ENCODE measurements at regions of chr11 and their contacts with region 1.

Region 1: GRCh38 chr11:78416305-78417178 is 1.1 kb downstream of the GAB2 start:
- DNase-seq: no peak
- ATAC-seq: peak; percentile 63
- H3K4me3 ChIP-seq: peak overlapping the region; percentile 74
- H3K27ac ChIP-seq: peak overlapping the region; percentile 56
- H3K4me1 ChIP-seq: peaks cover 22% of the 10 kb centered on the region
- H3K27me3 ChIP-seq: no peaks in the 10 kb centered on the region
- CTCF ChIP-seq: peak; percentile 72 to 75 (median 72)
- EP300 ChIP-seq: no peak
- POLR2A ChIP-seq: peak; percentile 62; the same call in 1 of the 2 replicates
- RAD21 ChIP-seq: peak; percentile 72

Region 2: DNA sequence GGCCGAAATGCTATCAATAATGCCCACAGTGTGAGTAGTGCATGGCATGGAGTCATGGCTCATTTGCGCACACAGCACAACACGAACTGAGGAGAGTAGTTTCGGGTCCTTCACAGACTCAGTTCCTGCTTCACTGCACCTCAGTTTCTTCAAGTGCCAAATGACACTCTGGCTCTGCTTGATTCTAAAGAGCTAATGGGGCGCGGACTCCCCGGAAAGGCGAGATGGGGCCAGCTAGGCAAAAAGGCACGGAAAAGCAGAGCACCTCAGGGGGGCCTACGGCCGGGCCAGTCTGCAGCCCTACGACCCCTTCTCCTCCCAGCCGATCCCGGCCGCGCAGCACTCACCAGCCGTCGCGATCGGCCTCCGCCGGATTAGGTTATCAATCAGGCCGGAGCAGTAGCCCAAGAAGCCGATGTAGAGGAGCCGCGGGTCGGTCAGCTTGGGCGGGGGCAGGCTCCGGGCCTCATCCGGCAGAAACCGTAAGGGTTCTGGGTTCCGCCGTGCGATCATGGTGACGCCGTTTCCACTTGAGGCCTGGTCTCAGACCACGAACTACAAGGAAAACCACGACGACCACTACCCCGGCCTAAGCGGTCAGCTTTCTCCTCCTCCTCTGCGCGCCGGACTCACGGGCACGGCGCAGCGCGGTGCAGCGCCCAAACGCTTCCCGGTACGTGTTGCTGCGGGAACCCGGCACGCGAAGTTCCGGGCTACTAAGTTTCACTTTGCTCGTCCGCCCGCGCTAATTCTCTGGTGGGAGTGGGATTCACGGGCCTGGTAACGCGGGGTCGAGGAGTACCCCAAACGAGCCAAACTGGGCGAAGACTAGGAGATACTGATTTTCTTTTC is 337.1 kb before region 1 on chr11 and contains the start of gene NDUFC2:
- CTCF ChIA-PET with region 1: no interaction called
- POLR2A ChIA-PET with region 1: interaction called, 3 read pairs
- RAD21 ChIA-PET with region 1: no interaction called
- SMC1A ChIA-PET with region 1: no interaction called
- in situ Hi-C with region 1: no loop called
- intact Hi-C with region 1: loop called (anchors 10 kb)
- DNase-seq: peak; percentile 39
- ATAC-seq: peak; percentile 87
- H3K4me3 ChIP-seq: peak within 1 kb of the TSS; percentile 74
- H3K27ac ChIP-seq: peak within 1 kb of the TSS; percentile 75
- H3K4me1 ChIP-seq: peaks cover 4% of the 10 kb centered on the region
- H3K27me3 ChIP-seq: no peaks in the 10 kb centered on the region
- CTCF ChIP-seq: no peak
- EP300 ChIP-seq: no peak; a peak in 1 of 4 replicates
- POLR2A ChIP-seq: peak; percentile 89
- RAD21 ChIP-seq: no peak
- polyA plus RNA-seq, gene NDUFC2: 483 to 529 TPM

Region 3: GRCh38 chr11:78168539-78169477 is 247.7 kb before region 1 on chr11:
- CTCF ChIA-PET with region 1: no interaction called
- POLR2A ChIA-PET with region 1: no interaction called
- RAD21 ChIA-PET with region 1: no interaction called
- SMC1A ChIA-PET with region 1: no interaction called
- in situ Hi-C with region 1: no loop called
- intact Hi-C with region 1: no loop called
- DNase-seq: no peak
- ATAC-seq: no peak
- H3K4me3 ChIP-seq: no peak overlapping the region
- H3K27ac ChIP-seq: no peak overlapping the region
- H3K4me1 ChIP-seq: no peaks in the 10 kb centered on the region
- H3K27me3 ChIP-seq: no peaks in the 10 kb centered on the region
- CTCF ChIP-seq: no peak
- EP300 ChIP-seq: no peak
- POLR2A ChIP-seq: no peak
- RAD21 ChIP-seq: no peak

Region 4: DNA sequence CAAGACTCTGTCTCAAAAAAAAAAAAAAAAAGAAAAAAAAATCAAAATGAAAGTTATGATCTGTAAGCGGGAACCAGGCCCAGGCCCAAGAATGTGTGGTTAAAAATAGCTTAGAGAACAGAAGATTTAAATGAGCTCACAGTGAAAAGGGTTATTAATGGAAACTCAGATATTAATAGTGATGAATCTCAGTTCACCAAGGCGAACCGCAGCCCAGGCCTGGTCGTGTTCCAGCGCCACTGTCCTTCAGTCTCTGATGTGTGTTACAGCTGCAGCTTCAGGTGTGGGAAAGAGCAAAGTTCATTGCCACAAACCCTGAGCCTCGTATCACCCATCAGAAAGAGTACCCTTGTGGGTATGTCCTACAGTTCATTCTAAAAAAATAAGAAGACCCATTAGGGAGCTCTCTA is 106.0 kb before region 1 on chr11:
- CTCF ChIA-PET with region 1: interaction called, 3 read pairs
- POLR2A ChIA-PET with region 1: no interaction called
- RAD21 ChIA-PET with region 1: no interaction called
- SMC1A ChIA-PET with region 1: interaction called, 6 read pairs
- in situ Hi-C with region 1: no loop called
- intact Hi-C with region 1: loop called (anchors 5 kb)
- DNase-seq: peak; percentile 88
- ATAC-seq: peak; percentile 91
- H3K4me3 ChIP-seq: peak overlapping the region; percentile 2; the same call in 1 of the 2 replicates
- H3K27ac ChIP-seq: peak overlapping the region; percentile 50
- H3K4me1 ChIP-seq: peaks cover 46% of the 10 kb centered on the region
- H3K27me3 ChIP-seq: no peaks in the 10 kb centered on the region
- CTCF ChIP-seq: no peak
- EP300 ChIP-seq: no peak
- POLR2A ChIP-seq: no peak
- RAD21 ChIP-seq: peak; percentile 16; the same call in 1 of the 2 replicates

Region 5: GRCh38 chr11:78365381-78365792 is 51.2 kb before region 1 on chr11:
- CTCF ChIA-PET with region 1: no interaction called
- POLR2A ChIA-PET with region 1: no interaction called
- RAD21 ChIA-PET with region 1: no interaction called
- SMC1A ChIA-PET with region 1: no interaction called
- in situ Hi-C with region 1: no loop called
- intact Hi-C with region 1: no loop called
- DNase-seq: no peak
- ATAC-seq: no peak
- H3K4me3 ChIP-seq: no peak overlapping the region
- H3K27ac ChIP-seq: no peak overlapping the region
- H3K4me1 ChIP-seq: no peaks in the 10 kb centered on the region
- H3K27me3 ChIP-seq: no peaks in the 10 kb centered on the region
- CTCF ChIP-seq: no peak
- EP300 ChIP-seq: no peak
- POLR2A ChIP-seq: no peak
- RAD21 ChIP-seq: no peak

Region 6: DNA sequence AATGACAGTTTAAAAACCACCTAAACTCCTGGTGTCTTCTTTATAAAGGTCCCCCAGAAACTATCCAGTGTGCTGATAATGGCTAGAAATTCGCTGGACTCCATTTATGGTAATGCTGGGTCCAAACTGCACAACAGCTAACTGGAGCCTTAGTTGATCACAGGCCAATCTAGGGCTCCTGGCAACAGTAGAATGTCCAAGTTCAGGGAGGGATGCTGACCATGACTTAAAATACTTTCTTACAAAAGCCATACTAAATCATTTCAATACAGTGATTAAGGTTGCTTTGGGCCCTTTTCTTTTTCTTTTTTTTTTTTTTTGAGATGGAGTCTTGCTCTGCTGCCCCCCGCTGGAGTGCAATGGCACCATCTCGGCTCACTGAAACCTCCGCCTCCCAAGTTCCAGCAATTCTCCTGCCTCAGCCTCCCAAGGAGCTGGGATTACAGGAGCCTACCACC is 15.5 kb after region 1 on chr11:
- CTCF ChIA-PET with region 1: interaction called, 102 read pairs
- POLR2A ChIA-PET with region 1: interaction called, 12 read pairs
- RAD21 ChIA-PET with region 1: interaction called, 55 read pairs
- SMC1A ChIA-PET with region 1: interaction called, 87 read pairs
- in situ Hi-C with region 1: no loop called
- intact Hi-C with region 1: loop called (anchors 2 kb)
- DNase-seq: no peak
- ATAC-seq: no peak
- H3K4me3 ChIP-seq: no peak overlapping the region
- H3K27ac ChIP-seq: no peak overlapping the region
- H3K4me1 ChIP-seq: peaks cover 27% of the 10 kb centered on the region
- H3K27me3 ChIP-seq: no peaks in the 10 kb centered on the region
- CTCF ChIP-seq: peak in 2 of 3 experiments; percentile 35 to 41; a peak in 2 of 6 replicates
- EP300 ChIP-seq: no peak
- POLR2A ChIP-seq: no peak
- RAD21 ChIP-seq: peak; percentile 38; the same call in 1 of the 2 replicates

Region 7: DNA sequence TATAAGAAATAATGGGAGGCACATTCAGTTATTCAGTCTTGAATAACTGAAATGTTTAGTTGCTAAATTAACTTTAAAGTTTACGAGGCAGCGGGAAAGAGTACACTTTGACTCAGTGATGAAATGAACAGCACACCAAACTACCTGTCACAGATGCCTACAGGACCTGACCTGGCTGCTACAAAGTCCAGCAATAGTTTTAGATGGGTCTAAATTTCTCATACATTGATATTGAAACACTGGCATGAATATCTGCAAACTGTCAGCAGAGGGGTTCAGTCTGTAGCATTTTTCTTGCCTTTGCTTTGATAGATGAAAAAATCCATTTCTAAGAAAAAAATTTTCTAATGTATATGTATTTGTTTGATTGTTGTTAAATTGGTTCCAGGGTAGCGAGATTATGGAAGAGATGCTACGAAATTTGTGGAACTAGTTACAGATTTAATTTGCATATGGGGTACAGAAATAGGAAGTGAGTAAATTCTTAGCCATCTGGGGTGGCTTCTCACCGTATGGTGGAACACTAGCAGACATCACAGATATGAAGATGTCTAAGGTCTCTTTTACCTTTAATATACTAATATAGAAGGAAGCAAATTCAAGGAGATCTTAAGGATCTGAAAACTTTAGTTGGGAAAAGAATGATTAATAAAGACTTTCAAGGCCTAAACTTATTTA is 21.9 kb after region 1 on chr11:
- CTCF ChIA-PET with region 1: interaction called, 10 read pairs
- POLR2A ChIA-PET with region 1: interaction called, 6 read pairs
- RAD21 ChIA-PET with region 1: no interaction called
- SMC1A ChIA-PET with region 1: interaction called, 4 read pairs
- in situ Hi-C with region 1: no loop called
- intact Hi-C with region 1: loop called (anchors 2 kb)
- DNase-seq: no peak
- ATAC-seq: peak; percentile 93
- H3K4me3 ChIP-seq: no peak overlapping the region
- H3K27ac ChIP-seq: peak overlapping the region; percentile 42; the same call in 1 of the 2 replicates
- H3K4me1 ChIP-seq: peaks cover 14% of the 10 kb centered on the region
- H3K27me3 ChIP-seq: no peaks in the 10 kb centered on the region
- CTCF ChIP-seq: no peak
- EP300 ChIP-seq: no peak
- POLR2A ChIP-seq: no peak
- RAD21 ChIP-seq: no peak

Region 8: DNA sequence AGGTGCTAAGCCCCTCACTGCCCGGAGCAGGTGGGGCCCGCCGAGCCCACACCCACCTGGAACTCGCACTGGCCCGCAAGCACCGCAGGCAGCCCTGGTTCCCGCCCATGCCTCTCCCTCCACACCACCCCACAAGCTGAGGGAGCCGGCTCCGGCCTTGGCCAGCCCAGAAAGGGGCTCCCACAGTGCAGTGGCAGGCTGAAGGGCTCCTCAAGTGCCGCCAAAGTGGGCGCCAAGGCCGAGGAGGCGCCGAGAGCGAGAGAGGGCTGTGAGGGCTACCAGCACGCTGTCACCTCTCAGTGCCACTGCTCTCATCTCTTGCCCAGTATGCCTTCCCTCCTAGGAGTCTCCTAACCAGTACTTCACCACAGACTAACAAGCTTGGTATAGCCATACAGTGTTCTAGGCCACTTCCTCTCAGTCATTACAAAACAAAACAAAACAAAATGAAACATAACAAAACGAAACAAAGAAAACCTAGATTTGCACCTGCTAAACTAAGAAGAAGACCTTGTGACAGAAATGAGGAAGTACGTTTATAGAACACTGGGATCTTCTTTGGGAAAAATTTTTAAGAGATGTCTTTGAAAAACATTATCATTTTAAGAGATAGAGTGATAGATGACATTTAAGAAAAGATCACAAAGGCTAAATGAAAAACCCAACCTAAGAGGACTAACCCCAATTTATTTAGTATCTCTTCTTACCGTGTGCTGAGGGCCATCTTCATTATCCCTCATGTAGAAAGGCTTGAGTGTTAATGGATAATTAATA is 48.8 kb after region 1 on chr11:
- CTCF ChIA-PET with region 1: interaction called, 9 read pairs
- POLR2A ChIA-PET with region 1: no interaction called
- RAD21 ChIA-PET with region 1: interaction called, 5 read pairs
- SMC1A ChIA-PET with region 1: interaction called, 5 read pairs
- in situ Hi-C with region 1: no loop called
- intact Hi-C with region 1: loop called (anchors 1 kb)
- DNase-seq: peak; percentile 93
- ATAC-seq: peak; percentile 100
- H3K4me3 ChIP-seq: peak overlapping the region; percentile 35; the same call in 1 of the 2 replicates
- H3K27ac ChIP-seq: peak overlapping the region; percentile 90
- H3K4me1 ChIP-seq: peaks cover 26% of the 10 kb centered on the region
- H3K27me3 ChIP-seq: no peaks in the 10 kb centered on the region
- CTCF ChIP-seq: no peak
- EP300 ChIP-seq: peak; percentile 63 to 84
- POLR2A ChIP-seq: peak; percentile 78
- RAD21 ChIP-seq: no peak

Region 9: GRCh38 chr11:78574386-78575381 is 158.1 kb after region 1 on chr11 and contains the start of gene NARS2:
- CTCF ChIA-PET with region 1: interaction called, 32 read pairs
- POLR2A ChIA-PET with region 1: interaction called, 4 read pairs
- RAD21 ChIA-PET with region 1: interaction called, 6 read pairs
- SMC1A ChIA-PET with region 1: interaction called, 8 read pairs
- in situ Hi-C with region 1: no loop called
- intact Hi-C with region 1: no loop called
- DNase-seq: peak; percentile 95
- ATAC-seq: peak; percentile 96
- H3K4me3 ChIP-seq: peak within 1 kb of the TSS; percentile 82
- H3K27ac ChIP-seq: peak within 1 kb of the TSS; percentile 79
- H3K4me1 ChIP-seq: no peaks in the 10 kb centered on the region
- H3K27me3 ChIP-seq: no peaks in the 10 kb centered on the region
- CTCF ChIP-seq: no peak
- EP300 ChIP-seq: no peak
- POLR2A ChIP-seq: peak; percentile 89
- RAD21 ChIP-seq: no peak
- polyA plus RNA-seq, gene NARS2: 41.3 to 42.0 TPM

Measured in GM12878 (cell line).